BJ (cell line): ENCODE measurements at regions of chr1 and their contacts with region 1.

Region 1: DNA sequence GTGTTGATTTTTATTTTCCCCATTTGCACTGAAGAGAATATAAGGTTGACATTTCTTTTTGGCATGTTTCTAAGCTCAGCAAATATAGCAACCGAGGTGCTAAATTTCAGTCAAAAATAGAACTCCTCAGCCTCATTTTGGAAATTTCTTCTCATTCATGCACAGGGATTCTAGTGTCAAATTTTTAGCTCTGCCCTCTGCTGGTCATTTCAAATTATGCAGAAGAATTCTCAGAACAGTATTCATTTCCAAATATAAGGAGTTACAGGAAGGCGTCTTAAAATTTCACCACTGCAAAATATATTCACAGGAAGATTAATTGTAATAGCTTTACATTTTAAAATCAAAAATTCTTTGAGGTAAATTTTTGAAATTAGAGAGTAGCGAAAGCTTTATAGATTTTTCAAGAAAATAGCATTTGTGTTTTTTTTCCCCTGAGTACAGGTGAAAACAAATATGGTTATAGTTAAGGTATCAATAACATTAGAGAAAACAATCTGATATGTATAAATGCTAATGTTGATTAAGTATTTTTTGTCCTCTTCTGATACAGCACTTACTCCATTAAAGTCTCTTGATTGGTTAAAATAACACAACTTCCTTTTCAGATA is 57.9 kb downstream of the FMN2 start:
- DNase-seq: no peak
- H3K4me3 ChIP-seq: no peak overlapping the region
- H3K27me3 ChIP-seq: no peaks in the 10 kb centered on the region
- CTCF ChIP-seq: peak; percentile 65

Region 2: GRCh38 chr1:240027059-240027462 is 122.5 kb before region 1 on chr1:
- CTCF ChIA-PET with region 1: interaction called, 45 read pairs
- POLR2A ChIA-PET with region 1: no interaction called
- DNase-seq: no peak
- H3K4me3 ChIP-seq: no peak overlapping the region
- H3K27me3 ChIP-seq: no peaks in the 10 kb centered on the region
- CTCF ChIP-seq: peak; percentile 90

Region 3: DNA sequence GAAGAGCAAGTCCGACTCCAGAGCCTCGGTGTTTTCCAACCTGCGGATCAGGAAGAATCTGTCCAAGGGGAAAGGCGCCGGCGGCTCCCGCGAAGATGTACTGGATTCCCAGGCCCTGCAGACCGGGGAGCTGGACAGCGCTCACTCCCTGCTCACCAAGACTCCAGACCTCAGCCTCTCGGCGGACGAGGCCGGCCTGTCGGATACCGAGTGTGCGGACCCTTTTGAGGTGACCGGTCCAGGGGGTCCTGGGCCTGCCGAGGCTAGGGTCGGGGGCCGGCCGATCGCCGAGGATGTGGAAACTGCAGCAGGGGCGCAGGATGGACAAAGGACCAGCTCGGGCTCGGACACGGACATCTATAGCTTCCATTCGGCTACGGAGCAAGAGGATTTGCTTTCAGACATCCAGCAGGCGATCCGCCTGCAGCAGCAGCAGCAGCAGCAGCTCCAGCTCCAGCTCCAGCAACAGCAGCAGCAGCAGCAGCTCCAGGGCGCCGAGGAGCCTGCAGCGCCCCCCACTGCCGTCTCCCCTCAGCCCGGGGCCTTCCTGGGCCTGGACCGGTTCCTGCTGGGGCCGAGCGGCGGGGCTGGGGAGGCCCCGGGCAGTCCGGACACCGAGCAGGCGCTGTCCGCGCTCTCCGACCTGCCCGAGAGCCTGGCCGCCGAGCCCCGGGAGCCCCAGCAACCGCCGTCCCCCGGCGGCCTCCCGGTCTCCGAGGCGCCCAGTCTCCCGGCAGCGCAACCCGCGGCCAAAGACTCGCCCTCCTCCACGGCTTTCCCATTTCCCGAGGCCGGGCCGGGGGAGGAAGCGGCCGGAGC is 57.1 kb before region 1 on chr1:
- CTCF ChIA-PET with region 1: interaction called, 27 read pairs
- POLR2A ChIA-PET with region 1: interaction called, 3 read pairs
- DNase-seq: no peak
- H3K4me3 ChIP-seq: peak overlapping the region; percentile 65
- H3K27me3 ChIP-seq: no peaks in the 10 kb centered on the region
- CTCF ChIP-seq: peak; percentile 36

Region 4: GRCh38 chr1:240107058-240107684 is 42.4 kb before region 1 on chr1:
- CTCF ChIA-PET with region 1: interaction called, 10 read pairs
- POLR2A ChIA-PET with region 1: no interaction called
- DNase-seq: no peak
- H3K4me3 ChIP-seq: no peak overlapping the region
- H3K27me3 ChIP-seq: no peaks in the 10 kb centered on the region
- CTCF ChIP-seq: no peak

Region 5: GRCh38 chr1:240138867-240139266 is 10.7 kb before region 1 on chr1:
- CTCF ChIA-PET with region 1: interaction called, 12 read pairs
- POLR2A ChIA-PET with region 1: no interaction called
- DNase-seq: no peak
- H3K4me3 ChIP-seq: no peak overlapping the region
- H3K27me3 ChIP-seq: no peaks in the 10 kb centered on the region
- CTCF ChIP-seq: no peak

Region 6: GRCh38 chr1:240169188-240169587 is 19.6 kb after region 1 on chr1:
- CTCF ChIA-PET with region 1: interaction called, 13 read pairs
- POLR2A ChIA-PET with region 1: no interaction called
- DNase-seq: no peak
- H3K4me3 ChIP-seq: no peak overlapping the region
- H3K27me3 ChIP-seq: no peaks in the 10 kb centered on the region
- CTCF ChIP-seq: peak; percentile 26